Mucosa of descending colon (tissue), 3 donors: ENCODE measurements at regions of chr3 and their contacts with region 1.

Region 1: GRCh38 chr3:132722164-132723024 is at the start of gene NPHP3:
- DNase-seq: peak; percentile 98 to 99 (median 99)
- ATAC-seq: peak; percentile 89
- H3K4me3 ChIP-seq: peak within 1 kb of the TSS; percentile 87
- H3K4me1 ChIP-seq: peaks cover 11% of the 10 kb centered on the region
- CTCF ChIP-seq: no peak
- total RNA-seq, gene NPHP3: 18.0 to 32.7 (median 21.5) TPM

Region 2: GRCh38 chr3:132997404-132998185 is 275.2 kb after region 1 on chr3:
- intact Hi-C with region 1: no loop called
- DNase-seq: no peak
- ATAC-seq: no peak
- H3K4me3 ChIP-seq: no peak overlapping the region
- H3K4me1 ChIP-seq: no peaks in the 10 kb centered on the region
- CTCF ChIP-seq: no peak

Region 3: GRCh38 chr3:133426721-133427120 is 704.3 kb after region 1 on chr3:
- intact Hi-C with region 1: loop called (anchors 5 to 10 kb)
- DNase-seq: no peak
- ATAC-seq: no peak
- H3K4me3 ChIP-seq: no peak overlapping the region
- H3K4me1 ChIP-seq: peaks cover 4% of the 10 kb centered on the region
- CTCF ChIP-seq: no peak

Region 4: GRCh38 chr3:133573054-133573628 is 850.7 kb after region 1 on chr3:
- intact Hi-C with region 1: loop called in 1 of 2 experiments (anchors 10 kb)
- DNase-seq: peak; percentile 100
- ATAC-seq: peak; percentile 90
- H3K4me3 ChIP-seq: peak overlapping the region; percentile 75
- H3K4me1 ChIP-seq: peaks cover 16% of the 10 kb centered on the region
- CTCF ChIP-seq: peak; percentile 26